MCF 10A (cell line): ENCODE measurements at regions of chr11 and their contacts with region 1.

Region 1: GRCh38 chr11:62208785-62209144 is 292 bp downstream of the SCGB2A1 start:
- DNase-seq: no peak
- H3K4me3 Mint-ChIP-seq: no peak overlapping the region
- H3K27ac Mint-ChIP-seq: no peak overlapping the region
- H3K4me1 Mint-ChIP-seq: peaks cover 6% of the 10 kb centered on the region
- H3K27me3 Mint-ChIP-seq: peaks cover 23% of the 10 kb centered on the region
- CTCF ChIP-seq: no peak

Region 2: GRCh38 chr11:62169091-62169847 is 39.5 kb before region 1 on chr11:
- CTCF ChIA-PET with region 1: interaction called, 4 read pairs
- POLR2A ChIA-PET with region 1: no interaction called
- intact Hi-C with region 1: loop called (anchors 2 kb)
- DNase-seq: no peak
- H3K4me3 Mint-ChIP-seq: no peak overlapping the region
- H3K27ac Mint-ChIP-seq: no peak overlapping the region
- H3K4me1 Mint-ChIP-seq: no peaks in the 10 kb centered on the region
- H3K27me3 Mint-ChIP-seq: peaks cover 89% of the 10 kb centered on the region
- CTCF ChIP-seq: no peak